Activated CD4-positive, alpha-beta T cell treated with anti-CD3 and anti-CD28 coated beads for 36 hours (primary cell): ENCODE measurements at regions of chr1 and their contacts with region 1.

Region 1: GRCh38 chr1:61043010-61043820 is 39.1 kb upstream of the NFIA start:
- DNase-seq: peak; percentile 93
- ATAC-seq: peak; percentile 98
- H3K4me3 Mint-ChIP-seq: peak overlapping the region; percentile 52
- H3K27ac Mint-ChIP-seq: no peak overlapping the region
- H3K4me1 Mint-ChIP-seq: no peaks in the 10 kb centered on the region
- H3K27me3 Mint-ChIP-seq: peaks cover 30% of the 10 kb centered on the region

Region 2: GRCh38 chr1:59971464-59971911 is 1071.7 kb before region 1 on chr1:
- CTCF ChIA-PET with region 1: interaction called, 4 read pairs
- POLR2A ChIA-PET with region 1: no interaction called
- intact Hi-C with region 1: loop called (anchors 2 to 5 kb)
- DNase-seq: peak; percentile 74
- ATAC-seq: peak; percentile 47
- H3K4me3 Mint-ChIP-seq: no peak overlapping the region
- H3K27ac Mint-ChIP-seq: no peak overlapping the region
- H3K4me1 Mint-ChIP-seq: peaks cover 5% of the 10 kb centered on the region
- H3K27me3 Mint-ChIP-seq: peaks cover 21% of the 10 kb centered on the region

Region 3: DNA sequence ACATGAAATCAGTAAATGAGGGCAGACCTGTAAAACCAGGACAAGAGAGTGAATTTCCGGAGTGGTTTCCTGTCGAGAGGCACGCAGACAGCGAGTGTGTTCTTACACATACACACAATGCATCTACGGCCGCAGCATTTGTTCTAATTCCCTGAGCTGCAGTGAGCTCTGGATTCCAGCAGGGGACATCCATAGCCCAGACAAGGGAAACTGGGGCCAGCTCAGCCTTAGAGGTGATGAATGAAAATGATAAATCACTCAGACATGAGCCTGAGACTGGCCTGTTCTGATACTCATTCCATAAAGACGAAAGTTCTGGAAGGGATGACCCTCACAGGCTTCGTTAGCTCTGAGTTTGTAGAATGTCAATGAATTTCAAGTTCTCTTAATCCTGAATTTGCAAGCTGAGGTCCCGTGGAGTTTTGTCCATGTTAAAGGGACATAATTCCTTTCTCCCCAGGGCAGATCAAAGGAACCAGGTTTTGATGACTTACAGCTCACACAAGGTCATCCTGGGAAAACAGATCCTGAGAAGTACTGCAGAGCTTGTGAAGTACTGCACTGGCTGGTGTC is 761.8 kb before region 1 on chr1:
- CTCF ChIA-PET with region 1: interaction called, 5 read pairs
- POLR2A ChIA-PET with region 1: no interaction called
- intact Hi-C with region 1: loop called in 1 of 2 experiments (anchors 2 kb)
- DNase-seq: peak; percentile 66
- ATAC-seq: peak; percentile 93
- H3K4me3 Mint-ChIP-seq: no peak overlapping the region
- H3K27ac Mint-ChIP-seq: no peak overlapping the region
- H3K4me1 Mint-ChIP-seq: peaks cover 9% of the 10 kb centered on the region
- H3K27me3 Mint-ChIP-seq: no peaks in the 10 kb centered on the region

Region 4: GRCh38 chr1:60978421-60979357 is 64.5 kb before region 1 on chr1:
- CTCF ChIA-PET with region 1: interaction called, 6 read pairs
- POLR2A ChIA-PET with region 1: no interaction called
- intact Hi-C with region 1: loop called (anchors 1 to 2 kb)
- DNase-seq: peak; percentile 54
- ATAC-seq: peak; percentile 80
- H3K4me3 Mint-ChIP-seq: no peak overlapping the region
- H3K27ac Mint-ChIP-seq: no peak overlapping the region
- H3K4me1 Mint-ChIP-seq: peaks cover 2% of the 10 kb centered on the region
- H3K27me3 Mint-ChIP-seq: peaks cover under 1% of the 10 kb centered on the region

Region 5: GRCh38 chr1:61453111-61453961 is 410.1 kb after region 1 on chr1:
- CTCF ChIA-PET with region 1: interaction called, 4 read pairs
- POLR2A ChIA-PET with region 1: no interaction called
- intact Hi-C with region 1: loop called in 1 of 2 experiments (anchors 1 kb)
- DNase-seq: peak; percentile 84
- ATAC-seq: peak; percentile 94
- H3K4me3 Mint-ChIP-seq: no peak overlapping the region
- H3K27ac Mint-ChIP-seq: peak overlapping the region; percentile 14
- H3K4me1 Mint-ChIP-seq: peaks cover 12% of the 10 kb centered on the region
- H3K27me3 Mint-ChIP-seq: no peaks in the 10 kb centered on the region